ENCODE measurements at regions of chr19 and their contacts with region 1.

Region 1: GRCh38 chr19:16371540-16371986 is 46.9 kb downstream of the KLF2 start:
- DNase-seq: peak; percentile 90 to 96
- ATAC-seq: peak; percentile 48 to 78 (median 73)
- H3K4me3 ChIP-seq: peak overlapping the region; percentile 13
- H3K4me3 Mint-ChIP-seq: no peak overlapping the region
- H3K27ac ChIP-seq: peak overlapping the region; percentile 94
- H3K27ac Mint-ChIP-seq: no peak overlapping the region
- H3K4me1 ChIP-seq: peaks cover 99% of the 10 kb centered on the region
- H3K4me1 Mint-ChIP-seq: peaks cover 33 to 34% of the 10 kb centered on the region in 2 donors
- H3K27me3 ChIP-seq: no peaks in the 10 kb centered on the region
- H3K27me3 Mint-ChIP-seq: no peaks in the 10 kb centered on the region
- CTCF ChIP-seq: no peak

Region 2: DNA sequence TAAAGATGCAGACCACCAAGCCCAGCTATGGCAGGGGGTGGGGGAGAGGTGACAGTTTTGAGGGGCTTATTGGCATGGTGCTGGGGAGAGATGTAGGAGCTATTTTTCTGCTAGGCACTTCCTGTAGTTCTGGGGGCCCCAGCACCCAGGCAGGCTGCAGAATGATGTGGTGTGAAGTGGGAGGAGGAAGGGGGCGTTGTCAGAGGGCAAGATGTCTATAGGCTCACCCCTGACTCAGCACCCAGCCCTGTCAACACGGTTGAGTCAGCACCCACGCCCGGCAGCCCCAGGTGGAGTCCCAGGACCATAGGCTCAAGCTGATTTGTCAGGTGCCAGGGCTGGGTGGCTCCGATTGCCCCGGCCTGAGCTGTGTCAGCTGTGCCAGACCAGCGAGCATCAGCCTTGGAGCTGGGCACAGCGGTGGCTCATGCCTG is 41.2 kb before region 1 on chr19:
- intact Hi-C with region 1: loop called (anchors 1 kb)
- DNase-seq: peak; percentile 91 to 98
- ATAC-seq: peak; percentile 65 to 85 (median 69)
- H3K4me3 ChIP-seq: peak overlapping the region; percentile 7
- H3K4me3 Mint-ChIP-seq: peak overlapping the region; percentile 93
- H3K27ac ChIP-seq: peak overlapping the region; percentile 80
- H3K27ac Mint-ChIP-seq: peak overlapping the region; percentile 98 to 99
- H3K4me1 ChIP-seq: peaks cover 78% of the 10 kb centered on the region
- H3K4me1 Mint-ChIP-seq: peaks cover 56 to 69% of the 10 kb centered on the region in 2 donors
- H3K27me3 ChIP-seq: no peaks in the 10 kb centered on the region
- H3K27me3 Mint-ChIP-seq: no peaks in the 10 kb centered on the region
- CTCF ChIP-seq: no peak

Region 3: GRCh38 chr19:16338470-16339360 is 32.8 kb before region 1 on chr19:
- intact Hi-C with region 1: loop called (anchors 1 kb)
- DNase-seq: peak; percentile 61 to 77
- ATAC-seq: peak; percentile 33 to 54 (median 51)
- H3K4me3 ChIP-seq: peak overlapping the region; percentile 8
- H3K4me3 Mint-ChIP-seq: peak overlapping the region; percentile 87
- H3K27ac ChIP-seq: peak overlapping the region; percentile 69
- H3K27ac Mint-ChIP-seq: peak overlapping the region; percentile 97 to 98
- H3K4me1 ChIP-seq: peaks cover 100% of the 10 kb centered on the region
- H3K4me1 Mint-ChIP-seq: peaks cover 79 to 87% of the 10 kb centered on the region in 2 donors
- H3K27me3 ChIP-seq: no peaks in the 10 kb centered on the region
- H3K27me3 Mint-ChIP-seq: no peaks in the 10 kb centered on the region
- CTCF ChIP-seq: no peak

Region 4: GRCh38 chr19:16355293-16356043 is 16.1 kb before region 1 on chr19:
- intact Hi-C with region 1: no loop called
- DNase-seq: peak in 1 of 2 donors; percentile 55
- ATAC-seq: peak; percentile 58 to 90 (median 70)
- H3K4me3 ChIP-seq: no peak overlapping the region
- H3K4me3 Mint-ChIP-seq: peak overlapping the region; percentile 71
- H3K27ac ChIP-seq: no peak overlapping the region
- H3K27ac Mint-ChIP-seq: peak overlapping the region; percentile 26 to 65
- H3K4me1 ChIP-seq: peaks cover 54% of the 10 kb centered on the region
- H3K4me1 Mint-ChIP-seq: peaks cover 15 to 35% of the 10 kb centered on the region in 2 donors
- H3K27me3 ChIP-seq: no peaks in the 10 kb centered on the region
- H3K27me3 Mint-ChIP-seq: no peaks in the 10 kb centered on the region
- CTCF ChIP-seq: no peak

Region 5: DNA sequence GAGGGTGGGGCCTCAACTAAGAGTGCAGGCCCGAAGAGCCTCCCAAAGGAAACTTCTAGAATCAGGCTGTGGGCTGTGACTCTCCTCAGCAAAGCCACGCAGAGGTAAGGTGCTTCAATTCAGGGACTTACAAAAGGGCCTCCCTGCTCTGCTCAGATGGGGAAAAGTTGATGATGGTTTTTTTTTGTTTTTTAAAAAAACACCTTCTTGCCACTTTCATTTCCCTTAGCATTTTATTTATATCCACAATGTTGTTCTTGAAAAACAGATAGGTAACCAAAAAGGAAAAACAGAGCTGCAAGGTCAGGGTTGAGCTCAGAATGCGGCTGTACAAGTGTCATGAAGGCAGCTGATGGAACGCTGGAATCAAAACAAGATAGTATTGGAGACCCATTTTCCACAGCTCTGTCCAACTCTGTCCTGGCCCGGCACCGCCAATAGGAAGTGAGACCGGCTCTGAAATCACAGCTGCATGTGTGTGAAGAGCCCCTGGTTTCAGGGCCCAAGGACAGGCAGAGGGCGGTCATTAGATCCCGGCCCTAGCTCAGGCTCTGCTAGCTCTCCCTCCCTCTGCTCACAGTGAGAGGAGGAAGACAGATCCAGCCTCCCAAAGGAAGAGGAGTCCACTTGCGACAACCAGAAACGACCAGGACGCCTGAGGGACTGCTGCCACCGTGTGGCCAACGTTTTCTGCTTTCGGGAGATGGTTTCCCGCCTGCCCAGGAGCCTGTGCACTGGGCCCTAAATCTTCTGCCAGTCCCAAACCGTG is 11.4 kb after region 1 on chr19:
- intact Hi-C with region 1: loop called (anchors 1 kb)
- DNase-seq: peak; percentile 73 to 92
- ATAC-seq: peak; percentile 69 to 75 (median 73)
- H3K4me3 ChIP-seq: peak overlapping the region; percentile 8
- H3K4me3 Mint-ChIP-seq: peak overlapping the region; percentile 81
- H3K27ac ChIP-seq: peak overlapping the region; percentile 85
- H3K27ac Mint-ChIP-seq: peak overlapping the region; percentile 90 to 95
- H3K4me1 ChIP-seq: peaks cover 63% of the 10 kb centered on the region
- H3K4me1 Mint-ChIP-seq: peaks cover 39 to 60% of the 10 kb centered on the region in 2 donors
- H3K27me3 ChIP-seq: no peaks in the 10 kb centered on the region
- H3K27me3 Mint-ChIP-seq: no peaks in the 10 kb centered on the region
- CTCF ChIP-seq: peak; percentile 87

Measured in natural killer cell (primary cell).